CD8-positive, alpha-beta T cell (primary cell): ENCODE measurements at regions of chr10 and their contacts with region 1.

Region 1: DNA sequence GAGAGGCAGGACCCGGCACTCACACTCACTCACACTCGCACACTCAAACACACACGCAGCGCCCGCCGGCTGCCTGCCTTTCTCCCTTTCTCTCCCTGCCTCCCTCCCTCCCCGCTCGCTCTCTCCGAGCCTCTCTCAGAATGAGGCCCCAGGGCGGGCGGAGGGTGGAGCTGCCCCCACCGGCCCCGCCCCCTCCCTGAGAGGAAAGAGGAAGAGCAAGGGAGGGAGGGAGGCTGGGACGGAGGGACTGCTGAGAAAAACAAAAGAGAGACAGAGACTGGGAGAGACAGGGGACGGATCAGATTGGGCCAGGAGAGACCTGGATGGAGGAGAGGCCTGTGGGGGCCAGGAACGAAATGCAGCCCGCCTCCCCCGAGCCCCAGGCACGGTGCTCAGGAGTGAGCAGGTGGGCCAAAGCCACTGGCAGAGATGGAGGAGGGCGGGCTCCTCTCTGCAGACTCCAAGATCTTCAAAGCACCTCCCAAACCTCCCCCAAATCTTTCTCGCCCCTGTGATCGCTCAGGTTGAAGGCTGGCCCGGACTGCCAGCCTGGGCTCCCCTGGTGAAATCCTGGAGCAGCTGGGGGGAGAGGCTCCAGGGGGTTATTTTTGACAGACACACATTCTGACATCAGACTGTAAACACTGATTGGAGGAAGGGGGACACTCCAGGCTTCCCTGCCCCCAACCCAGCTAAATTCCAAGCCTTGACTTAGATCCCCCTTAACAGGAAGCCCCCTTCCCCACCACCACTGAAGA is 5.1 kb downstream of the LDB1 start:
- DNase-seq: peak; percentile 62 to 90 (median 84)
- ATAC-seq: peak; percentile 69
- H3K4me3 ChIP-seq: peak overlapping the region; percentile 57 to 75
- H3K4me3 Mint-ChIP-seq: peak overlapping the region; percentile 91
- H3K27ac ChIP-seq: peak overlapping the region; percentile 56 to 97
- H3K27ac Mint-ChIP-seq: peak overlapping the region; percentile 93
- H3K4me1 ChIP-seq: peaks cover 63% of the 10 kb centered on the region
- H3K4me1 Mint-ChIP-seq: peaks cover 71% of the 10 kb centered on the region
- H3K27me3 ChIP-seq: no peaks in the 10 kb centered on the region
- H3K27me3 Mint-ChIP-seq: no peaks in the 10 kb centered on the region
- CTCF ChIP-seq: no peak

Region 2: GRCh38 chr10:102055647-102056419 is 59.2 kb before region 1 on chr10 and contains the start of gene ARMH3:
- CTCF ChIA-PET with region 1: no interaction called
- POLR2A ChIA-PET with region 1: no interaction called
- intact Hi-C with region 1: loop called in 1 of 2 experiments (anchors 1 kb)
- DNase-seq: peak; percentile 75 to 95 (median 87)
- ATAC-seq: peak; percentile 93
- H3K4me3 ChIP-seq: peak within 1 kb of the TSS; percentile 93 to 94
- H3K4me3 Mint-ChIP-seq: peak within 1 kb of the TSS; percentile 97
- H3K27ac ChIP-seq: peak within 1 kb of the TSS; percentile 79 to 90
- H3K27ac Mint-ChIP-seq: peak within 1 kb of the TSS; percentile 95
- H3K4me1 ChIP-seq: peaks cover 40% of the 10 kb centered on the region
- H3K4me1 Mint-ChIP-seq: peaks cover 42% of the 10 kb centered on the region
- H3K27me3 ChIP-seq: no peaks in the 10 kb centered on the region
- H3K27me3 Mint-ChIP-seq: no peaks in the 10 kb centered on the region
- CTCF ChIP-seq: no peak
- total RNA-seq, gene ARMH3: 18.6 to 20.6 TPM

Region 3: GRCh38 chr10:102064868-102065560 is 50.0 kb before region 1 on chr10 and contains the start of gene HPS6:
- CTCF ChIA-PET with region 1: interaction called, 3 read pairs
- POLR2A ChIA-PET with region 1: interaction called, 3 read pairs
- intact Hi-C with region 1: loop called (anchors 1 to 5 kb)
- DNase-seq: peak; percentile 69 to 94 (median 89)
- ATAC-seq: peak; percentile 98
- H3K4me3 ChIP-seq: peak within 1 kb of the TSS; percentile 57 to 97
- H3K4me3 Mint-ChIP-seq: peak within 1 kb of the TSS; percentile 87
- H3K27ac ChIP-seq: peak within 1 kb of the TSS; percentile 66 to 85
- H3K27ac Mint-ChIP-seq: peak within 1 kb of the TSS; percentile 93
- H3K4me1 ChIP-seq: peaks cover 21% of the 10 kb centered on the region
- H3K4me1 Mint-ChIP-seq: peaks cover 28% of the 10 kb centered on the region
- H3K27me3 ChIP-seq: no peaks in the 10 kb centered on the region
- H3K27me3 Mint-ChIP-seq: no peaks in the 10 kb centered on the region
- CTCF ChIP-seq: no peak
- total RNA-seq, gene HPS6: 17.5 to 18.1 TPM